Posterior cingulate gyrus (tissue), 11 donors: ENCODE measurements at regions of chr1 and their contacts with region 1.

Region 1: DNA sequence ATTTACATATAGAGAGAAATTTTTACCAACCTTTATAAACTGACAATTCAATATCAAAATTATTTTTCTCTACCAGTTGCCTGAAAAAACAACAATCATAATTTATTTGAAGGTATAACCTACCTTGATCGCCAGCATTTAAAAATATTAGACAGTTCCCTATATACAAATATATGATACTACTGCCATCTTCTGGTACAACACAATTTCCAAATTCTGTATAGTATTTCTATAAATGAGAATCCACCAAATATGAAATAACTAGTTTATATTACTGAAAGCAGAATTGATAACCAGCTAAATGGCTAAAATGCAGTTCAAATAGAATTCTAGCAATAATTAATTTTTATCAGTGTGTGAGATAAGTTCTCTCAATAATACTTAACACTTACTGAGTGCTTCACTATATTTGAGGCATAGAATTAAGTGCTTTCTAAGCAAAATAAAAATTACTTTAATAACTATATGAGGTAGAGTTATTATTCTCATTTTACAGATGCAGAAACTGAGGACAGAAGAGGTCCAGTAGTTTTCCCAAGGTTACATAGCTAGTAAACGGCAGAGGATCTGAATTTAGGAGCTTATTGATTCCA is 75.6 kb downstream of the PIGK start:
- DNase-seq: no peak

Region 2: DNA sequence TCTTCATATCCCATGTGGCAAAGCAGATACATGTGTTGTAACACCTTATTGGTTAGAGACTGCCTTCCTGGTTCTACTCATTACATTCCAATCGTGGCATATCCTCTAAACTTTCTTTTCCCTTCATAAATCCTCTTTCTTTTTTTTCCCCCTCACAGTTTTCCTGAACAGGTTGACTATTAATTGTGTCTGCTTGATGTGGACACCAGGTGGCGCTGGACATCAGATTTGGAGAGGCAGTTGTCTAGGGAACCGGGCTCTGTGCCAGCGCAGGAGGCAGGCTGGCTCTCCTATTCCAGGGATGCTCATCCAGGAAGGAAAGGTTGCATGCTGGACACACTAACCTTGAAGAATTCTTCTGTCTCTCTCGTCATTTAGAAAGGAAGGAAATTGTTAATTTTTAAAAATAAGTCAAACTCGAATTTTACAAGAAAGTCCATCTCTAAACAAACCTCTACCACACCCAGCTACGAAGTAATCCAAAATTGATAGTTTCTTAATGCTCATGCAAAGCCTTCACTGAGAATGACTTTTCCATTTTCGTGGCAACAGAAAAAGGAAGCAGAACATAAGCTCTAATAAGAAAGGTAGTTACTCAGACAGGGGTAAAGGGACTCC is 1152.0 kb before region 1 on chr1:
- intact Hi-C with region 1: loop called (anchors 5 kb)
- DNase-seq: peak; percentile 79 to 98 (median 95)

Region 3: GRCh38 chr1:76330991-76331603 is 812.5 kb before region 1 on chr1:
- intact Hi-C with region 1: loop called (anchors 5 kb)
- DNase-seq: peak in 4 of 10 donors; percentile 21 to 39 (median 26)

Region 4: GRCh38 chr1:77533660-77534305 is 390.2 kb after region 1 on chr1:
- intact Hi-C with region 1: loop called (anchors 2 kb)
- DNase-seq: peak; percentile 40 to 95 (median 68)

Region 5: DNA sequence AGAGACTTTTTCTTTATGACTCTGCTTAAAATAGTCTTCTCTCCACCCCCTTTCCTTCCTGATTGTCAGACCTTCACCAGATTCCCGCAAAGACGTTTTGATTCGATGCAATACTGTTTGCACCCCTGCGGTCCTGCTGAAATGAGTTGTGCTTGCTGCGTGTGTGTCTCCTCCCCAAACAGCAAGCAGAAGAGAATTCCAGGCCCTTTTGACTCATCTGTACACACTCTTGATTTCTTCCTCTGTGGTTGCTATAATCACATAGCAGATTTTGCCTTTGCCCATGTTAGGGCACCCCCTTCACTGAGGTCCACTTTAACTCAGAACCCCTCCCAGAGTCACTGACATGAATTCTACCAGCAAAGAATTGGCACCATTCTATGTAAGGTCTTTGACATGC is 402.3 kb after region 1 on chr1:
- intact Hi-C with region 1: no loop called
- DNase-seq: no peak